ENCODE measurements at regions of chr11 and their contacts with region 1.

Region 1: GRCh38 chr11:19553683-19554333 is 158.8 kb upstream of the NAV2 start:
- H3K4me3 ChIP-seq: no peak overlapping the region
- H3K27ac ChIP-seq: no peak overlapping the region
- H3K4me1 ChIP-seq: no peaks in the 10 kb centered on the region
- CTCF ChIP-seq: peak; percentile 23; the same call in 1 of the 2 replicates

Region 2: DNA sequence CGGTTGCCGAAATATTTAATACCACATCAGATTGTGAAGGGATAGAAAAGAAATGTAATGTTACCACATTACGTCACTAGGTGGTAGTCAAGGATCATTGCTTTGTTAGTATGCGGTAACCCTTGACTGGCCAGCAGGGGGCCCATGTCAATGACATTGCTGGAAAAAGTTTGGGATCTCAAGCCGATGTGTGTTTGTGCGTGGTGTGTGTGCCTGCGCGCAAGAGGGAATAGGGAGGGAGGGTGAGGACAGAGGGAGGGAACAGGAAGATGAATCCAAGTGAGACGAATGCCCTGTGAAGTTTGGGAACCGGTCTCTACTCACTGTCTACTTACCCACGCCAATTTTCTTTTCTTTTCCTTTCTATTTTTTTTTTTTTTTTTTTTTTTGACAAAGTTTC is 482.6 kb before region 1 on chr11:
- CTCF ChIA-PET with region 1: interaction called, 166 read pairs
- POLR2A ChIA-PET with region 1: no interaction called
- H3K4me3 ChIP-seq: no peak overlapping the region
- H3K27ac ChIP-seq: no peak overlapping the region
- H3K4me1 ChIP-seq: no peaks in the 10 kb centered on the region
- CTCF ChIP-seq: peak; percentile 96

Region 3: GRCh38 chr11:19259487-19260345 is 294.1 kb before region 1 on chr11:
- CTCF ChIA-PET with region 1: interaction called, 82 read pairs
- POLR2A ChIA-PET with region 1: no interaction called
- H3K4me3 ChIP-seq: no peak overlapping the region
- H3K27ac ChIP-seq: no peak overlapping the region
- H3K4me1 ChIP-seq: no peaks in the 10 kb centered on the region
- CTCF ChIP-seq: no peak

Region 4: GRCh38 chr11:19311308-19312030 is 242.3 kb before region 1 on chr11:
- CTCF ChIA-PET with region 1: interaction called, 11 read pairs
- POLR2A ChIA-PET with region 1: no interaction called
- H3K4me3 ChIP-seq: no peak overlapping the region
- H3K27ac ChIP-seq: no peak overlapping the region
- H3K4me1 ChIP-seq: no peaks in the 10 kb centered on the region
- CTCF ChIP-seq: no peak

Region 5: DNA sequence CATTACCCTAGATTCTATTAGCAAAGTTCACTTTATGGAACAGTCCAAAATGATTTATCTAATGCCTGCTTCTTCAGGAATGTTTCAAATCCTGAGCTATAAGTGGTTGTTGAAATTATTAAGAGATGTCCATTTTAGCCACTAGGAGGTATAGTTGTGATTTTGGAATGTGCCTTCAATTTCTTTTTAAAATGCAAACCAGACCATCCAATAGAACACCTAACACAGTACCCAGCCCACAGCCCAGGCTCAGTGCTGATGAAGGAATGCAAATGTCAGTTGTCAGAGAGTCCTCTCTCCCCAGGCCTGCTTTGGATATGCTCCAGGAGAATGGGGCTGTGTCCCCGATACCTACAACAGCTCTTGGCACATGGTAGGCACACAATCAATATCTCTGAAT is 227.3 kb before region 1 on chr11:
- CTCF ChIA-PET with region 1: interaction called, 38 read pairs
- POLR2A ChIA-PET with region 1: no interaction called
- H3K4me3 ChIP-seq: no peak overlapping the region
- H3K27ac ChIP-seq: no peak overlapping the region
- H3K4me1 ChIP-seq: no peaks in the 10 kb centered on the region
- CTCF ChIP-seq: no peak

Region 6: DNA sequence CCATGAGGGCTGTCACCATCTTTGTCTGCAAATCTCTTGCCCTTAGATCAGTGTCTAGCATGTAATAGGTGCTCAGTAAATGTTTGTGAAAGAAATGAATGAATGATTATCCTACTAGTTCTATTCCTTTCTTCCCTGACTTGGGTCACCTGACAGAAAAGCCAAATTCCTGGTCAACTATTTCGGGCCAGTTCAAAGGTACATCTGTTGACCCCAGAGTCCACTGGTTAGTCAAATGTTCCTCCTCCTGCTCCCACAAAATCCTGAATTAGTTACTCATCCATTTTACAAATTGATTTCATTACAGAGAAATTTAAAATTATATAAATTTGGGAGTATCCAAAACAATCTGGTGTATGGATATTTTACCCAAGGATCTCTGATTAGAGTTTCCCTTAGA is 34.2 kb after region 1 on chr11:
- CTCF ChIA-PET with region 1: no interaction called
- POLR2A ChIA-PET with region 1: no interaction called
- H3K4me3 ChIP-seq: no peak overlapping the region
- H3K27ac ChIP-seq: no peak overlapping the region
- H3K4me1 ChIP-seq: no peaks in the 10 kb centered on the region
- CTCF ChIP-seq: no peak

Region 7: DNA sequence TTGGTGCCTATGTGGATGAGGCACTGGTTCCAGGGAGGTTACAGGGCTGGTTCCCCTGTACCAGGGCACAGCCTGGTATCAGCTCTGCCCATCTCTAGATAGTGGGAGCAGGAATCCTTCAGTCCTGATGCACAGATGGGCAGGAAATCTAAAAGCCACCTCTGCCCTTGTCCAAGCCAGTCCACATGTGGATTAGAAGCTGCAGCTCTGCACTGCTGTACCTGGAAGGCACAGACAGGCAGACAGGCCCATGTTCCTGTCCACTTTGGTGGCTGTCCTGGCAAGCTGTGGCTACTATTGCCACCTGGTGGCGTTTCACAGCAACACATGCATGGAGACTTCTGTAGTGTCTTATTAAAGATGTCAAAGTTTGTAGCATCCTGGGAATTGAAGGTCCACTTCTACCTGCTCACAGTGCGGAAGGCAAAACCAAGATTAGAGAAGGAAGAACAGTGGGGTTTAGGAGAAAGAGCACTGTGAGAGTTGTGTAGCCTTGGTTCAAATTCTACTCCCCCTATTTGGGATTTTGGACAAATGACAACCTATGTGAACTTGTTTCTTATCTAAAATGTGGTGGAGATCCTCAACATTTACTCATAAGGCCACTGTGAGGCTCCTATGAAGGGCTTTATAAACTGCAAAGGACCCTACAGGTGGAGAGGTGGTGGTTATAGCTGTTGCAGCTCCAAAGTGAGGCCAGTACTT is 188.9 kb after region 1 on chr11:
- CTCF ChIA-PET with region 1: interaction called, 54 read pairs
- POLR2A ChIA-PET with region 1: no interaction called
- H3K4me3 ChIP-seq: no peak overlapping the region
- H3K27ac ChIP-seq: no peak overlapping the region
- H3K4me1 ChIP-seq: no peaks in the 10 kb centered on the region
- CTCF ChIP-seq: peak; percentile 58; the same call in 1 of the 2 replicates

Region 8: GRCh38 chr11:19903620-19904069 is 349.8 kb after region 1 on chr11:
- CTCF ChIA-PET with region 1: interaction called, 59 read pairs
- POLR2A ChIA-PET with region 1: no interaction called
- H3K4me3 ChIP-seq: no peak overlapping the region
- H3K27ac ChIP-seq: no peak overlapping the region
- H3K4me1 ChIP-seq: no peaks in the 10 kb centered on the region
- CTCF ChIP-seq: peak; percentile 56; the same call in 1 of the 2 replicates